ENCODE measurements at regions of chr14 and their contacts with region 1.

Region 1: GRCh38 chr14:22872033-22872832 is 693 bp downstream of the LRP10 start:
- DNase-seq: peak; percentile 67 to 86
- ATAC-seq: peak; percentile 44 to 56 (median 52)
- H3K4me3 ChIP-seq: peak overlapping the region; percentile 85
- H3K4me3 Mint-ChIP-seq: peak overlapping the region; percentile 93
- H3K27ac ChIP-seq: peak overlapping the region; percentile 93
- H3K27ac Mint-ChIP-seq: peak overlapping the region; percentile 95 to 96
- H3K4me1 ChIP-seq: peaks cover 17% of the 10 kb centered on the region
- H3K4me1 Mint-ChIP-seq: peaks cover 32 to 39% of the 10 kb centered on the region in 2 donors
- H3K27me3 ChIP-seq: no peaks in the 10 kb centered on the region
- H3K27me3 Mint-ChIP-seq: no peaks in the 10 kb centered on the region
- CTCF ChIP-seq: peak; percentile 81

Region 2: GRCh38 chr14:22589096-22589839 is 283.0 kb before region 1 on chr14 and contains the start of gene DAD1:
- intact Hi-C with region 1: loop called (anchors 5 kb)
- DNase-seq: peak; percentile 100
- ATAC-seq: peak; percentile 86 to 96 (median 90)
- H3K4me3 ChIP-seq: peak within 1 kb of the TSS; percentile 80
- H3K4me3 Mint-ChIP-seq: peak within 1 kb of the TSS; percentile 90
- H3K27ac ChIP-seq: peak within 1 kb of the TSS; percentile 97
- H3K27ac Mint-ChIP-seq: peak within 1 kb of the TSS; percentile 97 to 99
- H3K4me1 ChIP-seq: peaks cover 19% of the 10 kb centered on the region
- H3K4me1 Mint-ChIP-seq: peaks cover 45 to 47% of the 10 kb centered on the region in 2 donors
- H3K27me3 ChIP-seq: no peaks in the 10 kb centered on the region
- H3K27me3 Mint-ChIP-seq: peaks cover 13 to 17% of the 10 kb centered on the region in 2 donors
- CTCF ChIP-seq: no peak
- total RNA-seq, gene DAD1: 79.5 to 97.9 (median 92.8) TPM

Region 3: DNA sequence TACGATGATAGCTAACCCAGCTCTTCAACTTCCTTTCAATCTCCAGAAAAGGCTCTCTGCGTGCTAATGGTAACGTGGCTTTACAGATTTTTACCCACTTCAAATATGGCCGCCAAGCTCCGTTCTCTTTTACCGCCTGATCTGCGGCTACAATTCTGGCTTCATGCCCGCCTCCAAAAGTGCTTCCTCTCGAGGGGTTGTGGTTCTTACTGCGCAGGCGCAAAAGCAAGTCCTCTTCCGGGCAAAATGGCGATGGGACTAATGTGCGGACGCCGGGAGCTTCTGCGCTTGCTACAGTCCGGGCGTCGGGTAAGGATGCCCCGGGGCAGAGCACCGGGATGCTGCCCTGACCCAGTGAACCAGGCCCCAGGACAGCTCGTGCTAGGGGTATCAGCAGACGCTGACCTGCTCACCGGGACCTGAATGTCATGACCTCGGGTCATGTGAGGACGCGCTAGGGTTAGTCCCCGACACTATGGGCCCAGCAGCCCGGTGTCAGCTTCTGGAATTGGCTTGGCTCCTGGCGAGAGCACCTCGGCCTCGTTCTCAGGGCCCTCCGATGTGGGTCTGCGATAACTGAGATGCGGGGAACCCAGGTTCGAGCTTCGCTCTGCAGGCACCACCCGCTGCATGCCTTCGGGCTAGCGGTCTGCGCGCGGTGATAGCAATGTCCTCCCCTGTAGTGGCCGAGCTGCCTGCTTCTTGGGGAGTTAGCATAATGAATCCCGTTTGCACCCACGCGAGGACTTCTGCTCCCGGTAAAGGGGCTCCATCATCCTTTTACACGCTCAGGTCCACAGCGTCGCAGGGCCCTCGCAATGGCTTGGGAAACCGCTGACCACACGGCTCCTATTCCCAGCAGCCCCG is 105.5 kb before region 1 on chr14 and contains the start of gene OXA1L:
- intact Hi-C with region 1: loop called (anchors 5 kb)
- DNase-seq: peak; percentile 90 to 99
- ATAC-seq: peak; percentile 92 to 95 (median 95)
- H3K4me3 ChIP-seq: peak within 1 kb of the TSS; percentile 86
- H3K4me3 Mint-ChIP-seq: peak within 1 kb of the TSS; percentile 92
- H3K27ac ChIP-seq: peak within 1 kb of the TSS; percentile 79
- H3K27ac Mint-ChIP-seq: peak within 1 kb of the TSS; percentile 93 to 94
- H3K4me1 ChIP-seq: peaks cover 14% of the 10 kb centered on the region
- H3K4me1 Mint-ChIP-seq: peaks cover 35 to 36% of the 10 kb centered on the region in 2 donors
- H3K27me3 ChIP-seq: no peaks in the 10 kb centered on the region
- H3K27me3 Mint-ChIP-seq: no peaks in the 10 kb centered on the region
- CTCF ChIP-seq: no peak
- total RNA-seq, gene OXA1L: 121 to 143 (median 125) TPM

Region 4: GRCh38 chr14:22886500-22887259 is 14.4 kb after region 1 on chr14:
- intact Hi-C with region 1: loop called (anchors 2 kb)
- DNase-seq: peak; percentile 63 to 84
- ATAC-seq: peak; percentile 78 to 80 (median 79)
- H3K4me3 ChIP-seq: peak overlapping the region; percentile 44
- H3K4me3 Mint-ChIP-seq: peak overlapping the region; percentile 91
- H3K27ac ChIP-seq: peak overlapping the region; percentile 72
- H3K27ac Mint-ChIP-seq: peak overlapping the region; percentile 74 to 85
- H3K4me1 ChIP-seq: peaks cover 34% of the 10 kb centered on the region
- H3K4me1 Mint-ChIP-seq: peaks cover 40 to 64% of the 10 kb centered on the region in 2 donors
- H3K27me3 ChIP-seq: no peaks in the 10 kb centered on the region
- H3K27me3 Mint-ChIP-seq: peaks cover 0 to 3% of the 10 kb centered on the region in 2 donors
- CTCF ChIP-seq: peak; percentile 21

Region 5: DNA sequence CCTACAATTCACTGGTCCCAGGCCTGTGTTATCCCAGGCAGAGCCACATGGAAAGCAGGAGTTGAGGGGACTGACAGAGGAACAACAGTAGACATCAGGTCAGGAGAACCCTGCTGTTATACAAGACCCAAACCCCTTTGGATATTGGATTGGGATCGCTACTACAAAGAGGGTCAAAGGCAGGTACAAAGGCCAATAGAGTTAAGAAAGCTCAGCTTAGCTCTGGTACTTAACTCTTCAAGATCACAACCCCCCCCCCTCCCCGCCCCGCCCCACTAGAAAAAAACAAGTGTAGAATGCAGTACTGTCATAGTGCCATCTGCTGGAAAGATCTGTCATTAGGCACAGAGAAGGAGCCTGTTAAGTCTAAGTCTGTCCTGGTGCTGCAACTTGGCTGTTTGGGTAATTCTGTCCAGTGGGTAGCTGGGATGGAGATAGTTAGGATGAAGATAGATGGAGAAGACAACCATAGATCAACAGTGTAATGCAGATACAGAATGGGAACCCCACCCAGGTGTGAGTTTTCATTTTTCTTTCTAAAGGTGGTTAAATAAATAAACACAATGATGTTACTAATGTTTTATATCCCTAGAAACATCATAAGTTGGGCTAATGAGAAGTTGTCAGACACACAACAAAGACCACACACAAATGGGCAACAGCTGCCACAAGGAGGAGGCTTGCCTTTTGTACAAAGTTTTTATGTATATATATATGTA is 28.0 kb after region 1 on chr14:
- intact Hi-C with region 1: loop called (anchors 1 kb)
- DNase-seq: peak in 1 of 2 donors; percentile 86
- ATAC-seq: peak; percentile 67 to 90 (median 82)
- H3K4me3 ChIP-seq: no peak overlapping the region
- H3K4me3 Mint-ChIP-seq: no peak overlapping the region
- H3K27ac ChIP-seq: no peak overlapping the region
- H3K27ac Mint-ChIP-seq: peak overlapping the region in 1 of 2 donors; percentile 6
- H3K4me1 ChIP-seq: no peaks in the 10 kb centered on the region
- H3K4me1 Mint-ChIP-seq: peaks cover 0 to 15% of the 10 kb centered on the region in 2 donors
- H3K27me3 ChIP-seq: no peaks in the 10 kb centered on the region
- H3K27me3 Mint-ChIP-seq: no peaks in the 10 kb centered on the region
- CTCF ChIP-seq: peak; percentile 65